Activated CD8-positive, alpha-beta T cell treated with anti-CD3 and anti-CD28 coated beads, Interleukin-2, amount 10 ng/mL, durations not matched to agents 7 days and 5 days (primary cell): ENCODE measurements at regions of chr16 and their contacts with region 1.

Region 1: DNA sequence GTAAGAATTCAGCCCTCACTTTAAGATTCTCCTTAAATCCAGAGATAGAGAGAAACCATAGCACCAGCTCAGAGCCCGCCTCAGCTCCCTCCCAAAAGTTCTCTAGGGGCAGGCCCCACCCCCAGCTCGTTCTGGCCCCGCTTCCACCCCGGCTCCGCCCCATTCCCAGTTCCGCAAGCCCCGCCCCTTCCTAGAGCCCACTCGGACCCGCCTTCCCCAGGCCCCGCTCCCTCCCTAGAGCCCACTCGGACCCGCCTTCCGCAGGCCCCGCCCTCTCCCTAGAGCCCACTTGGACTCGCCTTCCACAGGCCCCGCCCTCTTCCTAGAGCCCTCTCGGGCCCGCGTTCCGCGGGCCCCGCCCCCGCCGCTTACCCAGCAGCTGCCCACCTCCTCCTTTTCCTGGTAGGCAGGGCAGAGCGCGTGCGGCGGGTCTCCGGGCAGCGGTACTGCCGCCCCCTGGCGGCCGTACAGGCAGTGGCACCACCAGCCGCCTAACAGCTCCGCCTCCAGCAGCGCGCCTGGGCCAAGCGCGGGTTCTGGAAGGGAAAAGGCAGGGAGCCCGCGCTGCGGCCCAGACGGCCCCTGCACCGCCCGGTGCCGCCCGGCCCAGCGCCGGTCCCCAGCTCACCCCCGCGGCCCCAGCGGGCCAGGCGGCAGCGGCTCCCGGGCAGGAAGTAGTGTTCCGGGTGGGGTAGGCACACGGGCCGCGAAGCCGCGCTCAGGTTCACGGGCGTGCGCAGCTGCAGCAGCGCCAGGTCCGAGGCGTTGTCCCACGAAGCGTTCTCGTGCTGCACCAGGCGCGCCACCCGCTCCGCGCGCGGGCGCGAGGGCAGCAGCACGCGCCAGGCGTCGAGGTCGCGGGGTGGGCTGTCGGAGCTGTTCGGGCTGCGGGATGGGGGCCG is 6.8 kb upstream of the PRSS8 start:
- DNase-seq: peak; percentile 99
- ATAC-seq: peak; percentile 94
- H3K4me3 Mint-ChIP-seq: peak overlapping the region; percentile 74
- H3K27ac Mint-ChIP-seq: peak overlapping the region; percentile 85
- H3K4me1 Mint-ChIP-seq: peaks cover 17% of the 10 kb centered on the region
- H3K27me3 Mint-ChIP-seq: peaks cover 6% of the 10 kb centered on the region

Region 2: DNA sequence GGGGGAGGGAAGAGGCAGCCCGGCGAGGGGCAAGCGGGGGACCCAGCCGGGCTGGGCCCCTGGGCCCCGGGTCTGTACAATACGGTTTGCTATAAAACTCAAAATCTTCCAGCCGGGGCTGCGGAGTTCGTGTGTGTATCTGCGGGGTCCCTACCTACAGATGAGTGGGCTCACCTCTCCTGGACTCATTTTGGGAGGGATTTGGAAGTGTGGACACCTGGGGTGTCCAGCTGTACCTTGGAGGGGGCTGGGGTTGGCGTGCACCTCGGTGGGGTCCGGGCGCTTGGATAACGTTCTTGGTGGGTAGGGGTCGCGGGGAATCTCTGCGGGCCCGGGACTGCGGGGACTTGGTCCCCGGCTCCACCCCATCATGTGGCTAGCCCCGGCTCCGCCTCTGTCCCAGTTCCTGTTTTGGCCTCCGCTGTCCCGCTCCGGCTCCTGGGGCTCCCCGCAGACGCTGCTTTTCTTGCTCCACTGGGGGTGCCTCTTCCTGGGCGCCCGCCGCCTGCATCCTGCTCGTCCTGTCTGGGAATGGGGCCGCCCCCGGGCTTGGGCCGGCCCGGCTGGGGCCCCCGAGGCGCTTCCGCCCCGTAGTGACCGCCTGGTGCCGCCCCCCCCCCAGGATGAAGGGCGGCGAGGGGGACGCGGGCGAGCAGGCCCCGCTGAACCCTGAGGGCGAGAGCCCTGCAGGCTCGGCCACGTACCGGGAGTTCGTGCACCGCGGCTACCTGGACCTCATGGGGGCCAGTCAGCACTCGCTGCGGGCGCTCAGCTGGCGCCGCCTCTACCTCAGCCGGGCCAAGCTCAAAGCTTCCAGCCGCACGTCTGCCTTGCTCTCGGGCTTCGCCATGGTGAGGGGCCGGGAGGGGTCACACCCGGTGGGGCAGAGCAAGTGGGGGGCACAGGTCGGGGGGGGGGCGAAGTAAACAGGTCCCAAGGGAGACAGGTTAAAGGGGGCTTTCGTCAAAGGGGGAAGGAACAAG is 193.4 kb before region 1 on chr16 and contains the start of gene ORAI3:
- CTCF ChIA-PET with region 1: interaction called, 15 read pairs
- POLR2A ChIA-PET with region 1: interaction called, 4 read pairs
- DNase-seq: peak; percentile 61
- ATAC-seq: peak; percentile 66
- H3K4me3 Mint-ChIP-seq: peak within 1 kb of the TSS; percentile 96
- H3K27ac Mint-ChIP-seq: peak within 1 kb of the TSS; percentile 82
- H3K4me1 Mint-ChIP-seq: peaks cover 31% of the 10 kb centered on the region
- H3K27me3 Mint-ChIP-seq: no peaks in the 10 kb centered on the region
- total RNA-seq, gene ORAI3: 21.4 to 23.1 TPM

Region 3: GRCh38 chr16:31029272-31029671 is 113.1 kb before region 1 on chr16:
- CTCF ChIA-PET with region 1: no interaction called
- POLR2A ChIA-PET with region 1: no interaction called
- DNase-seq: no peak
- ATAC-seq: no peak
- H3K4me3 Mint-ChIP-seq: no peak overlapping the region
- H3K27ac Mint-ChIP-seq: no peak overlapping the region
- H3K4me1 Mint-ChIP-seq: peaks cover 17% of the 10 kb centered on the region
- H3K27me3 Mint-ChIP-seq: no peaks in the 10 kb centered on the region

Region 4: DNA sequence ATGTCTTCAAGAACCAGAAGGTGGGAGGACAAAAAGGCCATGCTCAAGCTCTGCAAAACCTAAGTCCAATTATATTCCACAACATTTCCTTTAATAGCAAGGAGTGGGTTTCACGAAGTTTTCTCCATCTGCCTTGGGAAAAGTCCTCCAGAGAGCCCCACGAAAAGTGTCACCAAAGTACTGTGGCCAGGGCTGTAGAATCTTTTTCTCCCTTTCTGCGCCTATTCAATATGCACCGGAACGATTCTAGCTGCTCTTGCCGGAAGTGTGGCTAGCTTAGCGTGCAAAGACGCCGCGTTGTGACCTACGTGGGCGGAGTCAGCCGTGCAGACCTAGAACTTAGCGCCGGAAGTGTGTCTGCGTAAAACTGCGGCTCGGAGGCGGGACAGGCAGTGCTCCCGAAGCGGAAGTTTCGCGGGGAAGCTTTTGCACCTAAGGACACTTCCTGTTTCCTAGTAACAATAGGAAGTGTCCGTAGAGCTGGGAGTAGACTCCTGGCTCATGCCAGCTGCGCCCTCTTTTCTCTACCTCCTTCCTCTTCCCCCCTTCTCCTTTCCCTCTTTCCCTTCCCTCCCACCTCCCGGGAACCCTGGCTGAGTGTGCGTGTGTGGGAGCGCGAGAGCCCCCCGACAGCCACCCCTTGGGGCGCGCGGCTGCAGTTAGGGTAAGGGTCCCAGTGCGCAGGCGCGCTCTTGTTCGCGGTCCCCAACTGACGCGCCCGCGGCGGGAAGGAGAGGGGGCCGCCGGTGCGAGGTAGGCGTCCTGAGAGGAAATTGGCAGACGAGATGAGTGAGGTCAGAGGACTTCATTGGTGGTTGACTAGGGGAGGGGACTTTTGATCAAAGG is 68.2 kb before region 1 on chr16 and contains the starts of genes ZNF646 and ZNF668:
- CTCF ChIA-PET with region 1: interaction called, 19 read pairs
- POLR2A ChIA-PET with region 1: interaction called, 9 read pairs
- DNase-seq: peak; percentile 100
- ATAC-seq: peak; percentile 77
- H3K4me3 Mint-ChIP-seq: peak within 1 kb of the TSS; percentile 99
- H3K27ac Mint-ChIP-seq: peak within 1 kb of the TSS; percentile 99
- H3K4me1 Mint-ChIP-seq: peaks cover 48% of the 10 kb centered on the region
- H3K27me3 Mint-ChIP-seq: no peaks in the 10 kb centered on the region
- total RNA-seq, gene ZNF646: 26.0 to 30.3 TPM
- total RNA-seq, gene ZNF668: 20.8 to 22.2 TPM

Region 5: GRCh38 chr16:31099860-31100638 is 42.3 kb before region 1 on chr16:
- CTCF ChIA-PET with region 1: interaction called, 13 read pairs
- POLR2A ChIA-PET with region 1: no interaction called
- DNase-seq: no peak
- ATAC-seq: no peak
- H3K4me3 Mint-ChIP-seq: no peak overlapping the region
- H3K27ac Mint-ChIP-seq: no peak overlapping the region
- H3K4me1 Mint-ChIP-seq: peaks cover 10% of the 10 kb centered on the region
- H3K27me3 Mint-ChIP-seq: peaks cover 3% of the 10 kb centered on the region

Region 6: GRCh38 chr16:31128711-31129567 is 13.4 kb before region 1 on chr16:
- CTCF ChIA-PET with region 1: interaction called, 16 read pairs
- POLR2A ChIA-PET with region 1: no interaction called
- DNase-seq: no peak
- ATAC-seq: no peak
- H3K4me3 Mint-ChIP-seq: no peak overlapping the region
- H3K27ac Mint-ChIP-seq: peak overlapping the region; percentile 76
- H3K4me1 Mint-ChIP-seq: peaks cover 5% of the 10 kb centered on the region
- H3K27me3 Mint-ChIP-seq: no peaks in the 10 kb centered on the region

Region 7: GRCh38 chr16:31179747-31180459 is 37.5 kb after region 1 on chr16 and contains the start of gene FUS:
- CTCF ChIA-PET with region 1: interaction called, 44 read pairs
- POLR2A ChIA-PET with region 1: interaction called, 46 read pairs
- DNase-seq: peak; percentile 92
- ATAC-seq: peak; percentile 56
- H3K4me3 Mint-ChIP-seq: peak within 1 kb of the TSS; percentile 94
- H3K27ac Mint-ChIP-seq: peak within 1 kb of the TSS; percentile 97
- H3K4me1 Mint-ChIP-seq: peaks cover 56% of the 10 kb centered on the region
- H3K27me3 Mint-ChIP-seq: no peaks in the 10 kb centered on the region
- total RNA-seq, gene FUS: 536 to 569 TPM

Region 8: DNA sequence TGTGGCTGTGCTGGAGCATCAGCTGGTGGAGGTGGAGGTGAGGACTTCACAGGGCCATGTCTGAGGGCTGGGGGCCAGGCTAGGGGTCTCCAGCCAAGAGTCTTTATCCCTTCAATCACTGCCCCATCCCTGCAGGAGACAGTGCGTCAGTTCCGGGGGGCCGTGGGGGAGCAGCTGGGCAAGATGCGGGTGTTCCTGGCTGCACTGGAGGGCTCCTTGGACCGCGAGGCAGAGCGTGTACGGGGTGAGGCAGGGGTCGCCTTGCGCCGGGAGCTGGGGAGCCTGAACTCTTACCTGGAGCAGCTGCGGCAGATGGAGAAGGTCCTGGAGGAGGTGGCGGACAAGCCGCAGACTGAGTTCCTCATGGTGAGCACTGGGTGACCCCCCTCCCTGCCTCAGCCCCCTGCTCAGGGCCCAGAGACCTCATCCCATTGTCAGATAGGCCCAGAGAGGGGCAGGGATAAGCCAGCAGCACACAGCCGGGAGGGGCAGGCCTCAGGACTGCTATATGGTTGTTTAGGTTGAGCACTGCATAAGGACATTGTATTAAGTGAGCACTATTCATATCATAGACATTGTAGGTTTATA is 76.9 kb after region 1 on chr16:
- CTCF ChIA-PET with region 1: no interaction called
- POLR2A ChIA-PET with region 1: no interaction called
- DNase-seq: no peak
- ATAC-seq: no peak
- H3K4me3 Mint-ChIP-seq: no peak overlapping the region
- H3K27ac Mint-ChIP-seq: no peak overlapping the region
- H3K4me1 Mint-ChIP-seq: peaks cover 19% of the 10 kb centered on the region
- H3K27me3 Mint-ChIP-seq: peaks cover 47% of the 10 kb centered on the region

Region 9: GRCh38 chr16:31229501-31229900 is 87.1 kb after region 1 on chr16:
- CTCF ChIA-PET with region 1: no interaction called
- POLR2A ChIA-PET with region 1: no interaction called
- DNase-seq: no peak
- ATAC-seq: no peak
- H3K4me3 Mint-ChIP-seq: no peak overlapping the region
- H3K27ac Mint-ChIP-seq: no peak overlapping the region
- H3K4me1 Mint-ChIP-seq: no peaks in the 10 kb centered on the region
- H3K27me3 Mint-ChIP-seq: peaks cover 7% of the 10 kb centered on the region